GM12878 (cell line): ENCODE measurements at regions of chr16 and their contacts with region 1.

Region 1: GRCh38 chr16:84726079-84726668 is 26.4 kb downstream of the USP10 start:
- DNase-seq: no peak
- ATAC-seq: peak; percentile 66
- H3K4me3 ChIP-seq: peak overlapping the region; percentile 66
- H3K27ac ChIP-seq: peak overlapping the region; percentile 66
- H3K4me1 ChIP-seq: peaks cover 44% of the 10 kb centered on the region
- H3K27me3 ChIP-seq: no peaks in the 10 kb centered on the region
- CTCF ChIP-seq: peak; percentile 90 to 96 (median 91)
- EP300 ChIP-seq: 0 out of 4 replicates have a peak, but pooled peaks of 1 of the 2 experiments have one; percentile 18
- POLR2A ChIP-seq: peak; percentile 32; the same call in 1 of the 2 replicates
- RAD21 ChIP-seq: peak; percentile 84

Region 2: GRCh38 chr16:84511180-84511824 is 214.9 kb before region 1 on chr16:
- CTCF ChIA-PET with region 1: interaction called, 55 read pairs
- POLR2A ChIA-PET with region 1: interaction called, 3 read pairs
- RAD21 ChIA-PET with region 1: interaction called, 62 read pairs
- SMC1A ChIA-PET with region 1: interaction called, 48 read pairs
- in situ Hi-C with region 1: loop called (anchors 5 kb)
- intact Hi-C with region 1: loop called (anchors 2 kb)
- DNase-seq: peak; percentile 62
- ATAC-seq: peak; percentile 37
- H3K4me3 ChIP-seq: no peak overlapping the region
- H3K27ac ChIP-seq: peak overlapping the region; percentile 63
- H3K4me1 ChIP-seq: peaks cover 64% of the 10 kb centered on the region
- H3K27me3 ChIP-seq: no peaks in the 10 kb centered on the region
- CTCF ChIP-seq: peak; percentile 93 to 96 (median 94)
- EP300 ChIP-seq: no peak
- POLR2A ChIP-seq: no peak
- RAD21 ChIP-seq: peak; percentile 96

Region 3: GRCh38 chr16:84641643-84642358 is 84.4 kb before region 1 on chr16:
- CTCF ChIA-PET with region 1: interaction called, 12 read pairs
- POLR2A ChIA-PET with region 1: interaction called, 8 read pairs
- RAD21 ChIA-PET with region 1: interaction called, 6 read pairs
- SMC1A ChIA-PET with region 1: interaction called, 8 read pairs
- in situ Hi-C with region 1: no loop called
- intact Hi-C with region 1: no loop called
- DNase-seq: no peak
- ATAC-seq: no peak
- H3K4me3 ChIP-seq: peak overlapping the region; percentile 24; the same call in 1 of the 2 replicates
- H3K27ac ChIP-seq: peak overlapping the region; percentile 60
- H3K4me1 ChIP-seq: peaks cover 47% of the 10 kb centered on the region
- H3K27me3 ChIP-seq: no peaks in the 10 kb centered on the region
- CTCF ChIP-seq: no peak
- EP300 ChIP-seq: no peak
- POLR2A ChIP-seq: no peak
- RAD21 ChIP-seq: no peak

Region 4: DNA sequence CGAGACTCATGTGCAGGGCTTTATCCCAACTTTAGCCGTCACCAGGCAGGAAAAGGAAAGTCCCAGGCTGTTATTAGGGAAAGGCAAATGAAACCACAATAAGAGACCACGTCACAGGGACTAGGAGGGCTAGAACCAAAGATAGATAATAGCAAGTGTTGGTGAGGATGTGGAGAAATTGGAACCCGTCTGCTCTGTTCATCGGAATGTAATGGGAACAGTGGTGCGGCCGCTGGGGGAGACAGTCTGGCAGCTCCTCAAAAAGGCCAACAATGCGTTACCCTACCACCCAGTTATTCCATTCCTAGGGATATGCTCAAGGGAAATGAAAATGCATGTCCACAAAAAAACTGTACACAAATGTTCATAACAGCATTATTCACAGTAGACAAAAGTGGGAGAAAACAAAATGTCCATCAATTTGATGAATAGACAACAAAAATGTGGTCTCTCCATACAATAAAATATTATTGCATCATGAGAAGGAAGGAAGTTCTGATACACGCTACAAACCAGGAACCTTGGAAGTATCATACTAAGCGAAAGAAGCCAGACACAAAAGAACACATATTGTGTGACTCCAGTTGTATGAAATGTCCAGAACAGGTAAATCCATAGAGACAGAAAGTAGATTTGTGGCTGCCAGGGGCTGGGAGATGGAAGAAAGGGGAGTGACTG is 45.9 kb before region 1 on chr16:
- CTCF ChIA-PET with region 1: interaction called, 10 read pairs
- POLR2A ChIA-PET with region 1: interaction called, 6 read pairs
- RAD21 ChIA-PET with region 1: interaction called, 37 read pairs
- SMC1A ChIA-PET with region 1: interaction called, 5 read pairs
- in situ Hi-C with region 1: no loop called
- intact Hi-C with region 1: no loop called
- DNase-seq: no peak
- ATAC-seq: no peak
- H3K4me3 ChIP-seq: no peak overlapping the region
- H3K27ac ChIP-seq: no peak overlapping the region
- H3K4me1 ChIP-seq: no peaks in the 10 kb centered on the region
- H3K27me3 ChIP-seq: no peaks in the 10 kb centered on the region; a peak in 1 of 4 replicates
- CTCF ChIP-seq: no peak
- EP300 ChIP-seq: no peak
- POLR2A ChIP-seq: no peak
- RAD21 ChIP-seq: no peak

Region 5: DNA sequence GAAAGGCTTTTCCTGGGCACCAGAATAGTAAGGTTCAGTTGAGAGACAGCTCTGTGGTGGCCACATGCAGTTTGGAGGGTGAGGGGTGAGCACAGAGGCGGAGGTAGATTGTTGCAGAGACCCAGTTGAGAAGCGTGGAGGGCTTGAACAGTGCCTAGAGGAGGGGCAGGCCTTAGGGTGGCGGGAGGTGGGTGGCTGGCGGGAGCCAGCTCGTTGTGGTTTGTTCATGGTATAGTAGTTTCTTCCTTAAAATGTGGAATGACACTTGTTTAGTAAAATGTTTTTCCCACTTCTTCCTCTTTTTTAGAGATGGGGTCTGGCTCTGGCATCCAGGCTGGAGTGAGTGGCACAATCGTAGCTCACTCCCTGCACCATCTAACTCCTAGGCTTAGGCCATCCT is 12.1 kb before region 1 on chr16:
- CTCF ChIA-PET with region 1: interaction called, 34 read pairs
- POLR2A ChIA-PET with region 1: interaction called, 5 read pairs
- RAD21 ChIA-PET with region 1: interaction called, 8 read pairs
- SMC1A ChIA-PET with region 1: interaction called, 23 read pairs
- in situ Hi-C with region 1: no loop called
- intact Hi-C with region 1: no loop called
- DNase-seq: no peak
- ATAC-seq: no peak; the same call in 2 of the 3 replicates
- H3K4me3 ChIP-seq: no peak overlapping the region
- H3K27ac ChIP-seq: no peak overlapping the region
- H3K4me1 ChIP-seq: peaks cover 9% of the 10 kb centered on the region
- H3K27me3 ChIP-seq: no peaks in the 10 kb centered on the region
- CTCF ChIP-seq: no peak
- EP300 ChIP-seq: no peak
- POLR2A ChIP-seq: no peak
- RAD21 ChIP-seq: no peak

Region 6: GRCh38 chr16:84970447-84971127 is 244.4 kb after region 1 on chr16:
- CTCF ChIA-PET with region 1: interaction called, 16 read pairs
- POLR2A ChIA-PET with region 1: no interaction called
- RAD21 ChIA-PET with region 1: interaction called, 4 read pairs
- SMC1A ChIA-PET with region 1: interaction called, 4 read pairs
- in situ Hi-C with region 1: no loop called
- intact Hi-C with region 1: no loop called
- DNase-seq: peak; percentile 27
- ATAC-seq: peak; percentile 99
- H3K4me3 ChIP-seq: no peak overlapping the region
- H3K27ac ChIP-seq: no peak overlapping the region
- H3K4me1 ChIP-seq: no peaks in the 10 kb centered on the region
- H3K27me3 ChIP-seq: no peaks in the 10 kb centered on the region
- CTCF ChIP-seq: peak; percentile 89 to 92 (median 90)
- EP300 ChIP-seq: no peak
- POLR2A ChIP-seq: no peak
- RAD21 ChIP-seq: peak; percentile 82